CD14-positive monocyte (primary cell): ENCODE measurements at regions of chr6 and their contacts with region 1.

Region 1: DNA sequence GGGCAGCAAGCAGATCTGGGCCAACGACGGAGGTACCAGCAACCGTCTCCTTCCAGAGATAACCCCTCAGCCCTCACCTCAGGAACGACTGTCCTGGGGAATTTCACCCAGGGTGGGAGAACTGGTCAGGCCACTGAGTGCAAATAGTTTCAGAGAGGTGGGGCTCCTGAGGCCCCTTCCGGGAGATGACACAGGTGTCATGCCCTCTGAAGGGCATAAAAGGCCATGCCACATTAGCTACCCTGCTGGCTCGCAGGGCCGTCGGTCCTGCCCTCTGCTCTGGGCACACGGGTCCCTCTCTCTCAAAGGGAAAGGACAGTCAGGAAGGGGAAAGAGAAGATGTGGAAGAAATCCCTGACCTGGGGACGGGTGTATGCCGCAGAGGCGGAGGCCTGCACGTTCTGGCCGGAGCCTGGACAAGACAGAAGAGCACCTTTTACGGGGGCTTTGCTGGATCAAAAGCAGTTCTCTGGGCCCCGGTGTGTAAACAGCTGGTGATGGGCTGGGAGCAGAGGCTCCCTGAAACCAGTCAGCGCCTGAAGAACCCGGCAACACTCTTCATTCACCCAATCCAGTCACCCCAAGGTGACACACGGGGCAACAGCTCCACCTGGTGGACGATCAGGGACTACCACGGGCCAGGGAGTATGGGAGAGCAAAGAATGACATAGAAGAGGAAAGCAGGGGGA is 6.4 kb upstream of the TAF8 start:
- DNase-seq: peak; percentile 78 to 82 (median 82)
- H3K4me3 ChIP-seq: peak overlapping the region in 1 of 3 experiments; percentile 11
- H3K4me3 Mint-ChIP-seq: peak overlapping the region in 1 of 2 donors; percentile 44
- H3K27ac ChIP-seq: no peak overlapping the region
- H3K27ac Mint-ChIP-seq: peak overlapping the region in 3 of 7 donors; percentile 53 to 70 (median 60)
- H3K4me1 ChIP-seq: peaks cover 58 to 68% of the 10 kb centered on the region in 2 donors
- H3K4me1 Mint-ChIP-seq: peaks cover 70% of the 10 kb centered on the region
- H3K27me3 ChIP-seq: peaks cover 0 to 8% of the 10 kb centered on the region in 2 donors
- H3K27me3 Mint-ChIP-seq: peaks cover 4 to 21% (median 11%) of the 10 kb centered on the region in 3 donors
- CTCF ChIP-seq: peak; percentile 96

Region 2: DNA sequence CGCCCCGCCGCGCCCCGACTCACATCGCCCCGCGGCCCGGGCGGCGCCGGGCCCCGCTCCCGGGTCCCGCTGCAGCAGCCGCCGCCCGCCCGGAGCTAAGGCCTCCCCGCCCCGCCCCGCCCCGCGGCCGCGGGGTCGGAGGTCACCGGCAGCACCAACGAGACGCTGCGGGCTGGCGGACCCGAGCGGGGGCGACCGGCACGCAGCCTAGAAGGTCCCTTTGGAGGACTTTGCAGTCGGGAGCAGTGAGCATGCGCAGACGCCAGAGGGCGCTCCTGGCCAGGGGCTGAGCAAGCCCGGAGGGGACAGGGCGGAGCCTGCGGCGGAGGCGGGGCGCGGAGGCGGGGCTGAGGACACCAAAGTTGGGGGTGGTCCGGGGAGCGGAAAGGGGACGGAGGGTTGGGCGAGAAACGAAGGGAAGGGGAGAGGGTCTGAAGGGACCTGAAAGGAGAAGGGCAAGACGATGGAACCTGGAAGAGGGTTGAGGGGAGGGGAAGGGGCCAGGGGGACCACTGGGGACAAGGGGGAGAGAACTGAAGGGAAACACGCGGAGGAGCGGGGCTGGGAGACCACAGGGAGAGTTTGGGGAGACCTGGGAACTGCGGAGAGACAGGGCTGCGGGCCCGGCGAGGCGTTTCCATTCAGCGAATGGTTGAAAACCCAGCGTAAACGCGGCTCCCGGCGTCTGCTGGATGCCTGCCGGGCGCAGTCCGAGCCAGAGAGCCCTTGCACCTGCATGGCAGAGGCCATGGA is 264.0 kb before region 1 on chr6 and contains the start of gene FRS3:
- intact Hi-C with region 1: loop called in 1 of 2 experiments (anchors 5 kb)
- DNase-seq: peak; percentile 94 to 96 (median 95)
- H3K4me3 ChIP-seq: peak within 1 kb of the TSS; percentile 61 to 84 (median 80)
- H3K4me3 Mint-ChIP-seq: peak within 1 kb of the TSS; percentile 89 to 92
- H3K27ac ChIP-seq: peak within 1 kb of the TSS in 1 of 2 donors; percentile 57
- H3K27ac Mint-ChIP-seq: peak within 1 kb of the TSS in 6 of 7 donors; percentile 56 to 91 (median 83)
- H3K4me1 ChIP-seq: peaks cover 56 to 74% of the 10 kb centered on the region in 2 donors
- H3K4me1 Mint-ChIP-seq: peaks cover 59% of the 10 kb centered on the region
- H3K27me3 ChIP-seq: peaks cover 0 to 3% of the 10 kb centered on the region in 2 donors
- H3K27me3 Mint-ChIP-seq: peaks cover 3 to 13% (median 6%) of the 10 kb centered on the region in 3 donors
- CTCF ChIP-seq: peak; percentile 78
- polyA plus RNA-seq, gene FRS3: 1.3 to 7.0 (median 2.6) TPM

Region 3: DNA sequence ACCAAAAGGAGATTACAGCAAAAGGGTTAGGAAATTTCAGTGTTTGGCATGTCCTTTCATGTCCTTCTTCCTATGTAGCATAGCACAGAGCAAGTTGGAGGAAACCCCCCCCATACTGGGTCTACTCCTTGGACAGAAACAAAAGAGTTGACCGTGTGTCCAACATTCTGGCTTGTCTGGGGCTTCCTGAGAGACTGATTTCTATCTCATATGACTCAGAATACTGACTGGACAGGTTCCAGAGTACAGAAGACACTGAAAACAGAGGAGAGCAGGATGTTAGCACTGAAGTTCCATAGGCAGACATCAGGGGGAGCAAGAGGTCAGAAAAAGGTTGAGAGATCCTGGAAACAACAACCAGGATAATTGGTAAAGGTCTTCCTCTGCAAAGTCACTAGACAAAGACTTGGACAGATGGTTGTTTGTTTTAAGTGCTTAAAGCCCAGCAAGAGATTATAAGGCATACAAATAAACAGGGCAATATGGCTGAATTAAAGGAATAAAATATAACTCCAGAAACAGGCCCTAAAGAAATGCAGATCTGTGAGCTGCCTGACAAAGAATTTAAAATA is 197.2 kb before region 1 on chr6:
- intact Hi-C with region 1: loop called (anchors 2 kb)
- DNase-seq: peak; percentile 34 to 53 (median 52)
- H3K4me3 ChIP-seq: no peak overlapping the region
- H3K4me3 Mint-ChIP-seq: no peak overlapping the region
- H3K27ac ChIP-seq: no peak overlapping the region
- H3K27ac Mint-ChIP-seq: peak overlapping the region in 1 of 7 donors; percentile 58
- H3K4me1 ChIP-seq: no peaks in the 10 kb centered on the region
- H3K4me1 Mint-ChIP-seq: no peaks in the 10 kb centered on the region
- H3K27me3 ChIP-seq: no peaks in the 10 kb centered on the region
- H3K27me3 Mint-ChIP-seq: no peaks in the 10 kb centered on the region
- CTCF ChIP-seq: peak; percentile 88

Region 4: DNA sequence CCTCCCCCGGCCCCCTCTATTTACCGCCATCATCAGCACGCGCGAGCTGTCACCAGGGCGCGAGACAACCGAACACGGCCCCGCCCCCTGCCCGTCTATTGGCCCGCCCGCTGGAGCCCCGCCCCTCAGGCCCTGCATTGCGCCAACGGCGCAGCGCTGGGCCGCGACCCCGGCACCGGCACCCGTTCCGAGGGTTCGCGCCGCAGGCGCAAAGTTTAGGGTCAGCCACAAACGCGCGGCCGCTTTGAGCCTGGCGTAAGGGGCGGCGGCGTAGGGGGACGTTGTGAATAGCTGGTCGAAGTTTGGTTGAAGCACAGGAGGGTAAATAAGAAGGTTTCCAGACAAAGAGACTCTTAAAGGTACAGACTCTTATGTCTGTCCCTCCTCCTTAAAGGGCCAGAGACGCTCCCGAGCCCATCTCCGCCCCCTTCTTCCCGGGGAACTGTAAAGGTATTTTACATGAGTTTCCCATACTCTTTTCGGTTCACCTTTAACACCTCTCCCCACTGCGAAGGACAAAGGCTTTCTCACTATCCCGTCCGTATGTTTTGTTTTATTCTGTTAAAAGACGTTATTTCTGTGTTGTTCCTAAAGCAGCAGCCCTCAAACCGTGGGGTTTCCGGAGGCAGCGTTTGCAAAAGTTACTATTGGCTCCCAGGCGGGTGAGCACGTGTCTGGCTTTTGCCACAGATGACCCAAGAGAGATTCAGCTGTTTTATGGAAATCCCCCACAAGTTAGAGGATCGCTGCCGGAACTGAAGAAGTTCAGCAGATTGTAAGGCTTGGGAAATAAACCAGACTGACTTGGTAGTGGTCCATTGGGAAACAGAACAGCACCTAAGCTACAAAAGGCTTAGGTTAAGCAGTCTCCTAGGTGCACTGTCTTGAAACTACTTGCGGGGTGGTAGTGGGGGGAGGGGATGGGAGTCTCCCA is 148.4 kb before region 1 on chr6 and contains the start of gene USP49:
- intact Hi-C with region 1: loop called (anchors 5 kb)
- DNase-seq: peak; percentile 85 to 96 (median 86)
- H3K4me3 ChIP-seq: peak within 1 kb of the TSS; percentile 85 to 95 (median 87)
- H3K4me3 Mint-ChIP-seq: peak within 1 kb of the TSS in 1 of 2 donors; percentile 94
- H3K27ac ChIP-seq: peak within 1 kb of the TSS; percentile 89 to 95
- H3K27ac Mint-ChIP-seq: peak within 1 kb of the TSS in 6 of 7 donors; percentile 90 to 97 (median 94)
- H3K4me1 ChIP-seq: peaks cover 18 to 24% of the 10 kb centered on the region in 2 donors
- H3K4me1 Mint-ChIP-seq: peaks cover 13% of the 10 kb centered on the region
- H3K27me3 ChIP-seq: peaks cover 2 to 5% of the 10 kb centered on the region in 2 donors
- H3K27me3 Mint-ChIP-seq: no peaks in the 10 kb centered on the region
- CTCF ChIP-seq: no peak
- polyA plus RNA-seq, gene USP49: 0.08 to 4.8 (median 0.37) TPM

Region 5: GRCh38 chr6:41901882-41902519 is 141.9 kb before region 1 on chr6:
- intact Hi-C with region 1: loop called in 1 of 2 experiments (anchors 5 kb)
- DNase-seq: peak; percentile 25 to 47 (median 26)
- H3K4me3 ChIP-seq: no peak overlapping the region
- H3K4me3 Mint-ChIP-seq: no peak overlapping the region
- H3K27ac ChIP-seq: no peak overlapping the region
- H3K27ac Mint-ChIP-seq: peak overlapping the region in 3 of 7 donors; percentile 7 to 52 (median 34)
- H3K4me1 ChIP-seq: no peaks in the 10 kb centered on the region
- H3K4me1 Mint-ChIP-seq: peaks cover 12% of the 10 kb centered on the region
- H3K27me3 ChIP-seq: no peaks in the 10 kb centered on the region
- H3K27me3 Mint-ChIP-seq: peaks cover 0 to 2% (median 0%) of the 10 kb centered on the region in 3 donors
- CTCF ChIP-seq: peak; percentile 53

Region 6: DNA sequence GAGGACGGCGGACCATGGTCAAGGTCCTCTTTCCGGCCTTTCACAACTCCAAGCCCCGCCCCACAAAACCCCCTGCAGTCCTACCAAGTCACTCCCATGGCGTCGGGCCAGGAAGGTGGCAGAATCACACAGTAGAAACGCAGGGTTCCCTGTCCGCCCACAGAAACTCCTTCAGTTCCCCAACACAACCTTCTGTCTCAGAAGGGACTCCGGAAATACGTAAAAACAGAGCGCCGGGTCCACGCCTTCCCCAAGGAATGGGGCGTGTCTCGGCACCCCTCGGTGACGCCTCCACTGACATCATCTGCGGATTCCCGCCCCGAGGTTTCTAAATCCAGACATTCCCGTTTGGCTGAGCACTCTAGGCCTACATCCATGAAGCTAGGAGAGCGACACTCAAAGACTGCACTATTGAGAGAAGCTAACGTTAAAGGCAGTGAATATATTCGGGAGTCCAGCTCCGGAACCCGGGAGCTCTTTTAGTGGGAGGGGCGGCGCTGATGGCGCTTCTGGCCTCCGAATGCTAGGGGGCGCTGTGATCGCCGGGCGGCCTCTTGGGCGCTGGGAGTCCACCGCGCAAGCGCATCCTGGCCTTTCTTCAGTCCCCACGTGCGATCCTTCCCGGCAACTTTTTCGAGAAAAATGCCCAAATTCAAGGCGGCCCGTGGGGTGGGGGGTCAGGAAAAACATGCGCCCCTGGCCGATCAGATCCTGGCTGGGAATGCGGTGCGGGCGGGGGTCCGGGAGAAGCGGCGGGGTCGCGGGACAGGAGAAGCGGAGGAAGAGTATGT is 122.8 kb before region 1 on chr6 and contains the starts of genes BYSL and MED20:
- intact Hi-C with region 1: loop called in 1 of 2 experiments (anchors 5 kb)
- DNase-seq: peak; percentile 96 to 99 (median 97)
- H3K4me3 ChIP-seq: peak within 1 kb of the TSS; percentile 78 to 91 (median 81)
- H3K4me3 Mint-ChIP-seq: peak within 1 kb of the TSS; percentile 98 to 100
- H3K27ac ChIP-seq: peak within 1 kb of the TSS; percentile 90 to 92
- H3K27ac Mint-ChIP-seq: peak within 1 kb of the TSS; percentile 98 to 100 (median 100)
- H3K4me1 ChIP-seq: peaks cover 28 to 42% of the 10 kb centered on the region in 2 donors
- H3K4me1 Mint-ChIP-seq: peaks cover 38% of the 10 kb centered on the region
- H3K27me3 ChIP-seq: no peaks in the 10 kb centered on the region
- H3K27me3 Mint-ChIP-seq: peaks cover 0 to 6% (median 1%) of the 10 kb centered on the region in 3 donors
- CTCF ChIP-seq: peak; percentile 99
- polyA plus RNA-seq, gene BYSL: 2.7 to 4.2 (median 3.9) TPM
- polyA plus RNA-seq, gene MED20: 6.3 to 16.2 (median 13.6) TPM

Region 7: DNA sequence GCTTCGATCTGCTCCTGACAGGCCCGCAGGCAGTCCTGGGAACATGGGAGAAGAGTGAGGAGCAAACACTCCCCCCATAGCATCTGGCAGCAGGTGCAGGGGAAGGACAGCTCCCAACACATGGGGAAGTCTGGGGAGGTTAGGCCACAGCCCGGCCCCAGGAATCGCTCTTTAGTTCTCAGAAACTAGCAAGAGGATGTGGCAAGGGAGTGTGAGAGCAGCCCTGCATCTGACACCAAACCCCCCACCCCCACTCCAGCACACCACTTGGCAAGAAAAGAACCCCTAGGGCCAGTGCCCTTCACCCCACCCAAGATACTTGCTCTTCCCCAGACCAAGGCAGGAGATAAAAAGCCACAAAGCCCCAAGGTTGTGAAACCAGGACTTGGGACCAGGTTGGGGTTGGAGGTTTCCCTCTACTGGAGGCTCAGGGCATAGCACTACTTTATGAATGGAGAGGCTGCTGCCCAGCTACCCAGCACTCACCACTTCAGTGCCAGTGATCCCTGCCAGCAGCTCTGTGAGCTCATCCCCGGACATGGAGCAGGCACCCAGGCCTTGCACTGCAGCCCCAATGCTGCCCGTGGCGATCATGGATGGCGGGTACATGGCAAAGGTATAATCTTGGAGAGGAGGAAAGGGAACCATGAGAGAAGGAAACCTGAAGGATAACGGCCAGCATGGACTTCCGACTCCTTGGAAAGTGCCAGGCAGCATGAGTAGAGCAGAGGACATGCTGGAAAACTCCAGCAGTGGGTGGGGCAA is 107.7 kb before region 1 on chr6:
- intact Hi-C with region 1: loop called (anchors 5 kb)
- DNase-seq: peak; percentile 80 to 87 (median 87)
- H3K4me3 ChIP-seq: peak overlapping the region in 1 of 3 experiments; percentile 97
- H3K4me3 Mint-ChIP-seq: peak overlapping the region; percentile 58 to 84
- H3K27ac ChIP-seq: peak overlapping the region; percentile 47 to 81
- H3K27ac Mint-ChIP-seq: peak overlapping the region; percentile 90 to 99 (median 98)
- H3K4me1 ChIP-seq: peaks cover 59 to 65% of the 10 kb centered on the region in 2 donors
- H3K4me1 Mint-ChIP-seq: peaks cover 63% of the 10 kb centered on the region
- H3K27me3 ChIP-seq: no peaks in the 10 kb centered on the region
- H3K27me3 Mint-ChIP-seq: peaks cover 0 to 2% (median 0%) of the 10 kb centered on the region in 3 donors
- CTCF ChIP-seq: peak; percentile 83

Region 8: DNA sequence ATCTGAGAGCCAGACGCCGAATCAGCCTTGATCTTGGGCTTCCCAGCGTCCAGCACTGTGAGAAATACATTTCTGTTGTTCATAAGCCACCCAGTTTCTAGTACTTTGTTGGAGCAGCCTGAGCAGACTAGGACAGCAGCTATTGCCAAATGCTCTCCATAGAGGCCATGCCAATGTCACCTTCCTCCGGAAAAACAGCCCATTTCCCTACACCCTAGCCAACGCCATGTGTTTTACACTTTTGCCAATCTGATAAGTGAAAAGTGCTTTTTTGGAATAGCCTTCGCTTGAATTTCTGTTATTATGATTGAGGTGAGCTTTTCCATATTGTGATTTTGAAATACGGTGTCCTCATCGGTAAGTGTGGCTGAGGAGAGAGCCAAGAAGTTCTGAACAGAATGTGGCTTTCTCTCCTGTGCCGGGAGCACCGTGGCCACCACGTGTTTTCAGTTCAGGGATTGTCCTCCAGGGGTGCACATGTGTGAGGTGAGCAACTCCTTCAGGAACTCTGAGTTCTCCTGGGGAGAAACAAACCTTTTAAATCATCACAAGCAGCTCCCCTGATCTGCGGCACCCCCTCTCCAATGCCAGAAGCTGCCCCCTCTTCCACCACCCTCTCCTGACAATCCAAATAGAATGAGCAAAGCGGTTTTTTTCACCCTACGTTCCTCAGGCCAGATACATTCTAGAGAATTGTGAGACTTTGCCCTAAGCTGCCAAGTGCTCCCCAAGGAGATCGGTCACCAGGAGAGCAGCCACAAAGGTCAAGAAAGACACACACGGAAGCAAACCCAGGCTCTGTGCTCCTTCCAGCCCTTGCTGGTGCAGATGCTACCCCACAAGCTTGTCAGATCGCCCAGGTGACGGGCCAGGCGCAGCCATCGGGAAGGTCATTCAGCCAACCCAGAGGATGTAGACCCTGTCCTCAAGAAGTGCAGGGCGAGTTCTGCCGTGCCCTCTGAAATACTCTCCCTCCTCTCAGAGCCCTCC is 42.4 kb after region 1 on chr6:
- intact Hi-C with region 1: no loop called
- DNase-seq: no peak
- H3K4me3 ChIP-seq: no peak overlapping the region
- H3K4me3 Mint-ChIP-seq: no peak overlapping the region
- H3K27ac ChIP-seq: no peak overlapping the region
- H3K27ac Mint-ChIP-seq: no peak overlapping the region
- H3K4me1 ChIP-seq: no peaks in the 10 kb centered on the region
- H3K4me1 Mint-ChIP-seq: peaks cover 7% of the 10 kb centered on the region
- H3K27me3 ChIP-seq: no peaks in the 10 kb centered on the region
- H3K27me3 Mint-ChIP-seq: peaks cover 0 to 5% (median 2%) of the 10 kb centered on the region in 3 donors
- CTCF ChIP-seq: no peak